IMR-90 (cell line): ENCODE measurements at regions of chr9 and their contacts with region 1.

Region 1: DNA sequence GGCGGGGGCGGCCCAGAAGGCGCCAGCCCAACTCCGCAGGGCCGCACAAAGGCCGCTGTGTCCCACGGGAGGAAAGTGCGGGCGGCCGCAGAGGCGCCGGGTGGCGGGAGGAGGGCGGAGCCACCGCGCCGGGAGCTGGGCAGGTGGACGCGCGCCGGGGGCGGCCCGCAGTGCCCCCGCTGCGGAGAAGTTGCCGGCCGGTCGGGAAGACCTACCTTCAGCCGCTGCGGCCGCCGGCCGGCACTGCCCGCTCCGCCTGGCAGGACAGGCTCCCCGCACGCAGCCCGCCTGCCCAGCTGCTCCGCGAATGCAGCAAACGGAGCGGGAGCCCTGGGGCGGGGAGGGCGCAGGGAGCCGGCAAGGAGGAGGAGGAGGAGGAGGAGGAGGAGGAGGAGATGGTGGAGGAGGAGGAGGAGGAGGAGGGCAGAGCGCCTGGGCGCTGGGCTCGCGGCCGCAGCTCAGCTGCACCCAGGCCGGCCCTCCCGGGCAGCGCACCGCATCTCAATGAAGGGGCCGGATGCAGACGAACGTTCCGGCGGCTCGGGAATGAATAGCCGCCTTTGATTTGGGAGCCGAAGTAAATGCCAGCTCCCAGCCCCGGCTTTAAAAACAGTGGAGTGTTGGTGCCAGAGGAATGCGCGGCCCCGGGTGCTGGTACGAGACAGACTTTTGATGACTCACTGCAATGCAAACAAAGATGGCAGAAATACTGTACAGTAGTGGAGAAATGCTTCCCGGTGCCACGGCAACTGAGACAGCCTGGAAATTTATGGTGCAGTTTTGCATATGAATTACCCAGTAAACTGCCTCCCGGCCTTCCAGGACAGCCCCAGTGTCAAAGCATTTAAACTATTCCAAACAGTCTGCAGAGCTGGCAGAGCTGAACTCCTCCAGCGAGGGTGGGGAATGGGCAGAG is 43.3 kb downstream of the NACC2 start:
- DNase-seq: peak; percentile 94
- ATAC-seq: peak; percentile 73
- H3K4me3 ChIP-seq: peak overlapping the region; percentile 44
- H3K27ac ChIP-seq: peak overlapping the region; percentile 88
- H3K4me1 ChIP-seq: peaks cover 19% of the 10 kb centered on the region
- H3K27me3 ChIP-seq: no peaks in the 10 kb centered on the region
- CTCF ChIP-seq: no peak
- POLR2A ChIP-seq: peak; percentile 57
- RAD21 ChIP-seq: peak; percentile 15; the same call in 1 of the 2 replicates

Region 2: GRCh38 chr9:135615666-135616618 is 435.8 kb before region 1 on chr9:
- CTCF ChIA-PET with region 1: no interaction called
- POLR2A ChIA-PET with region 1: no interaction called
- dilution Hi-C with region 1: no loop called
- in situ Hi-C with region 1: no loop called
- intact Hi-C with region 1: no loop called
- DNase-seq: no peak
- ATAC-seq: no peak; the same call in 1 of the 2 replicates
- H3K4me3 ChIP-seq: no peak overlapping the region
- H3K27ac ChIP-seq: no peak overlapping the region
- H3K4me1 ChIP-seq: no peaks in the 10 kb centered on the region
- H3K27me3 ChIP-seq: no peaks in the 10 kb centered on the region; the same call in 1 of the 2 replicates
- CTCF ChIP-seq: no peak
- POLR2A ChIP-seq: no peak
- RAD21 ChIP-seq: no peak

Region 3: DNA sequence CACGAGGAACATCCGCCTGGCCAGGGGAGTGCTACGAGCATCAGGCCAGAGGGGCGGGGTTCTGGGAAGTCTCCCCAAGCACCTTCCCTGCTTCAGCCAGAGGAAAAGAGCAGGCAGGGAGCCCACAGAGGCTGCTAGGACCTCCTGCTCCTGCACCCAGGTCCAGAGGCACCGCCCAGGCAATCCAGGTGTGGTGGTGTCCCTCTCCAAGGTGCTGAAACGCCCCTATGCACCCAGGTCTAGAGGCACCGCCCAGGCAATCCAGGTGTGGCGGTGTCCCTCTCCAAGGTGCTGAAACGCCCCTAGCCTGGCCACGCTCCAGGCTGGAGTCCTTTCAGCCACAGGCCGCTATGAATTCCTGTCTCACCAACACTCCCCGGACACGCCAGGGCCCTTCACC is 79.9 kb before region 1 on chr9:
- CTCF ChIA-PET with region 1: interaction called, 5 read pairs
- POLR2A ChIA-PET with region 1: no interaction called
- dilution Hi-C with region 1: no loop called
- in situ Hi-C with region 1: no loop called
- intact Hi-C with region 1: loop called (anchors 1 kb)
- DNase-seq: no peak
- ATAC-seq: no peak
- H3K4me3 ChIP-seq: no peak overlapping the region
- H3K27ac ChIP-seq: no peak overlapping the region
- H3K4me1 ChIP-seq: peaks cover 6% of the 10 kb centered on the region; the same call in 1 of the 2 replicates
- H3K27me3 ChIP-seq: peaks cover 9% of the 10 kb centered on the region; the same call in 1 of the 2 replicates
- CTCF ChIP-seq: no peak
- POLR2A ChIP-seq: no peak
- RAD21 ChIP-seq: no peak

Region 4: GRCh38 chr9:136023410-136024225 is 28.2 kb before region 1 on chr9:
- CTCF ChIA-PET with region 1: no interaction called
- POLR2A ChIA-PET with region 1: interaction called, 16 read pairs
- dilution Hi-C with region 1: no loop called
- in situ Hi-C with region 1: no loop called
- intact Hi-C with region 1: no loop called
- DNase-seq: peak; percentile 81
- ATAC-seq: peak; percentile 70
- H3K4me3 ChIP-seq: no peak overlapping the region
- H3K27ac ChIP-seq: peak overlapping the region; percentile 30; the same call in 1 of the 2 replicates
- H3K4me1 ChIP-seq: peaks cover 9% of the 10 kb centered on the region; the same call in 1 of the 2 replicates
- H3K27me3 ChIP-seq: no peaks in the 10 kb centered on the region
- CTCF ChIP-seq: no peak
- POLR2A ChIP-seq: no peak
- RAD21 ChIP-seq: no peak

Region 5: DNA sequence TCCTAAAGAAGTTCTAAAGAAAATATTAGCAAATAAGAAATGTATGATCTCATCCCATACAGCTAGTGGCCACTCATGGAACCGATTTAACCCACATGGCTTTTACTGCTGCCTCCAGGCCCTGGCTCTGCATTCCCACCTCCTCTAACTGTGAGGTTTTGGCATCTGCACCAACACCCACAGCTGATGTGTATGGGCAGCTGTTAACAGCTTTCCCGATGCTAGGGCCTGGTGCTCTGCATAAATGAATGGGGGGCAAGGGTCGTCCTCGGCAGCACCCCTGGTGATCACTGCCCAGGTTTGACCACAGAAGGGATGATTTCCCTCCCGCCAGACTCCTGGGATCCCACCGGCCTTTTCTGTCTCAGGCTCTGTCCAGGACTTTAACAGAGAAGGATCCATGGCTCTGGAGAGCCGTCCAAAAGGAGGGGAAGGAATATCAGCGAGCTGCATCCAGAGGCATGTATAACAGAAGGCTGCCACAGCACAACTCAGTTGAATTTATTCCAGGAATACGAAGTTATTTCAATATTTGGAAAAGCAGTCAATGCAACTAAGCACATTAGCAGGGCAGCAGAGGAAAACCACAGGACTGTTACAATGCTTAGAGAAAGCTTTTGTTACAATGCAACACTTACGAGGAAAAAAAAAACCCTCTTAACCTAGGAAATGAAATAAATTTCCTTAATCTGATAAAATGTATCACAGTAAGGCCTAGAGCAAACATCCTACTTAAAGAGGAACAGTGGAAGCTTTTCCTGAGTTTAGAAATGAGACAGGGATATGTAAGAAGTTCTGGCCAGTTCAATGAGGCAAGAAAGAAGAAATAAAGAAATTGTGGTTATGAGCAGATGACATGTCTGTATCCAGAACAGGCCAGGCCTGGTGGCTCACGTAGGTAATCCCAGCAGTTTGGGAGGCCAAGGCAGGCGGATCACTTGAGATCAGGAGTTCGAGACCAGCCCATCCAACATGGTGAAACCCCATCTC is 19.7 kb before region 1 on chr9:
- CTCF ChIA-PET with region 1: interaction called, 4 read pairs
- POLR2A ChIA-PET with region 1: interaction called, 16 read pairs
- dilution Hi-C with region 1: no loop called
- in situ Hi-C with region 1: no loop called
- intact Hi-C with region 1: loop called (anchors 2 kb)
- DNase-seq: peak; percentile 52
- ATAC-seq: peak; percentile 88
- H3K4me3 ChIP-seq: no peak overlapping the region
- H3K27ac ChIP-seq: peak overlapping the region; percentile 26; the same call in 1 of the 2 replicates
- H3K4me1 ChIP-seq: peaks cover 6% of the 10 kb centered on the region
- H3K27me3 ChIP-seq: no peaks in the 10 kb centered on the region
- CTCF ChIP-seq: no peak
- POLR2A ChIP-seq: no peak
- RAD21 ChIP-seq: no peak

Region 6: DNA sequence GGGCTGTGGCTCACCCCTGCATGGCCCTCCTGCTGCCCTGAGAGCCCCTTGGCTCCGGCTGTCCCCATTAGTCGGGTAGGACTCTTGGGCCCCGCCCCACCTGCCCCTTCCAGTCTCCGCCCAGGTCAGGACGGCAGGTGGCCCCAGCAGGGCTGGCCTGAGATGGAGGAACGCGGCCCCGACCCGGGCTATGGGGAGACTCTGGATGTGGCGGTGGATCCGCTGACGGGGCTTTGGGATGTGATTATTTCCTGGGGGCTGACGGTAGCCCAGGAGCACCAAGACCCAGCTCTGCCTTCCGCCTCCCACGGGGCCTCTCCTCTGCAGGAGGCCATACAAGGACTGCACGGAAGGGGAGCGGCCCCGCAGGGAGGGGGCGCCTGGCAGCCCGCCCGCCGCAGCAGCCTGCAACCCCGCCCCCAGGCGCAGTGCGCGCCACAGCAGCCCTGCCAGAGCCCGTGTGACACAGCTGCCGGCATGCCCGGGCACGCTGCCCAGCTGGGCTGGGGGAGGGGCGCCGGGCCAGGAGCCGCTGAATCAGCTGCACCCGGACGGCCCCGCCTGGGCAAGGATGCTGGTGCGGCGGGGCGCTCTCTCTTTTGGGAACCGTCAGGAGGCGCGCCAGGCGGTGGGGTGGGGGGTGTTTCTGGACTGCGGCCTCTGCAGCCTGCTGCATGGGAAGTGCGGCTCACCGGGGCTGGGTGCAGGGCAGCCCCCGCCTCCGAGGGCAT is 57.7 kb after region 1 on chr9:
- CTCF ChIA-PET with region 1: no interaction called
- POLR2A ChIA-PET with region 1: no interaction called
- dilution Hi-C with region 1: no loop called
- in situ Hi-C with region 1: no loop called
- intact Hi-C with region 1: loop called (anchors 5 kb)
- DNase-seq: peak; percentile 87
- ATAC-seq: peak; percentile 91
- H3K4me3 ChIP-seq: peak overlapping the region; percentile 6; the same call in 1 of the 2 replicates
- H3K27ac ChIP-seq: peak overlapping the region; percentile 66
- H3K4me1 ChIP-seq: peaks cover 21% of the 10 kb centered on the region
- H3K27me3 ChIP-seq: no peaks in the 10 kb centered on the region
- CTCF ChIP-seq: 0 out of 2 replicates have a peak, but pooled peaks have one; percentile 13
- POLR2A ChIP-seq: no peak
- RAD21 ChIP-seq: no peak